ENCODE measurements at regions of chr17 and their contacts with region 1.

Region 1: DNA sequence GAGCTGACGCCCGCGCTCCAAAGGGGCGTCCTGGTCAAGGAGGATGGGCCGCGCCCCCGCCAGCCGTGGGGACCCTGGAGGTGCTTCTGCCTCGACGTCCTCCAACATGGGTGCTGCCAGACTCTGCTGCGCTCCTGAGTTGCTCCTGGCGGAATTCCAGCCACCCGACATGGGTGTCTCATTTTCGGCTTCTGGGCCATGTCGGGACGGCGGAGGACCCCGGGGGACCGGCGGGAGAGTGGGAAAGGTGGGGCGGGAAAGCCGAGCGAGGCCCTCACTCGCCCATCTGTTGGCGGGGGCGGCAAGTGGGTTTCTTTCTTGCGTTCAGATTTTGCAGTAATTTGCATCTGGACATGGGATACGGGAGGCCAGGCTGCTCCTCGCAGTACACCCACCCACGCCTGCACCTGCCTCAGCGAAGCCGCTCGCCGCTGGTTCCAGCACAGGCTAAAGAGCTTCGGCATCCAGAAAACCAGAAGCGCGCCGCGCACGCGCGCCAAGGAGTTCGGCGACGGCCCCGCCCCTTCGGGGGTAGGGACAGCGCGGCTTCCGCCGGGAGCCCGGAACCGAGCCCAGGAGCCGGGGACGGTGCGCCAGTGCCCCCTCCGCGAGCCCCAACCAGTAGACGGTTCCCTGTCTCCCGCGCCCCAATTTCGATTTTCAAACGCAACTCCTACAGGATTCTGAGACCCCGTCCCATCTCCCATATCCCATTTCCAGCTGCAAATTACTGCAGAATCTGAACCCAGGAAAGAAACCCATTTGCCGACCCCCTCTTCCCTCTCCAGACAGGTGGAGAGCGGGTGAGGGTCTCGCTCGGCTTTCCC is at the start of gene ARMC7:
- DNase-seq: peak; percentile 96
- H3K4me3 Mint-ChIP-seq: peak within 1 kb of the TSS; percentile 90
- H3K27ac Mint-ChIP-seq: peak within 1 kb of the TSS; percentile 85
- H3K4me1 Mint-ChIP-seq: peaks cover 29% of the 10 kb centered on the region
- H3K27me3 Mint-ChIP-seq: no peaks in the 10 kb centered on the region
- total RNA-seq, gene ARMC7: 6.5 to 8.2 TPM

Region 2: GRCh38 chr17:75059369-75060345 is 50.0 kb before region 1 on chr17:
- CTCF ChIA-PET with region 1: interaction called, 14 read pairs
- POLR2A ChIA-PET with region 1: no interaction called
- intact Hi-C with region 1: no loop called
- DNase-seq: no peak
- H3K4me3 Mint-ChIP-seq: no peak overlapping the region
- H3K27ac Mint-ChIP-seq: no peak overlapping the region
- H3K4me1 Mint-ChIP-seq: peaks cover 7% of the 10 kb centered on the region
- H3K27me3 Mint-ChIP-seq: no peaks in the 10 kb centered on the region

Region 3: DNA sequence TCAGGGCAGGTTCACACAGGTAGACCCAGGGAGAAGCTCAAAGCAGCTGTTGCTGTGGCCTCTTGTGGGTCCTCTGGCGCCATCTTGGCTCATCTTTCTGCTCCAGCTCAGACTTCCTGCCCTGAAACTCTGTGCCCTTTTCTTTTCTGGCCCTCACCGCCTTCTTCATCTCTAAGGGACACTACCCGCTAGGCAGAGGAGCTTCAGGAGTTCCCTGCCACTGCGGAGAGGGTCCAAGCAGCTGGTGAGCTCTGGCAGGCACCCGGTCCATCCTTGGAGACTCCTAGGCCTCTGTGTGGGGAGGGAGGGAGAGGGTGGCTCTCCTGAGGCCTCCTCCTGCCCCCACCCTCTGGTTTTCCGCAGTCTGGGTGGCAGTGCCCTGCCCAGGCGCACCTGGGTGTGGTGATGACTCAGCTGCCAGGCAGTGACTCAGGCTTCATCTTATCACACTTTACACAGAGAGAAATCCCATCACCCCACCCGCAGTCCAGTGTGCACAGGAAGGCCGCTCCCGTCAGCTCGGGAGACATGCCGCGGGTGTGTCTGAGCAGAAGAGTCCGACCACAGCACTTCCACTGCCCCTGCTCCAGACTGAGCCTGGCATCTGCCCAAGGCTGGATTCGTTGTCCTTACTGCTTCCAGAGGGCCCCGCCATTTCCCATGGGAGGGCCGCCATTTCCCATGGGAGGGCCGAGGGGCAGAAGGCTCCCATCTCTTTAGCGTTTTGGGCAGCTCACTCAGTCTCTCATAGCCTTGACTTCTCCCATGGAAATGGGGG is 14.6 kb after region 1 on chr17:
- CTCF ChIA-PET with region 1: interaction called, 121 read pairs
- POLR2A ChIA-PET with region 1: interaction called, 17 read pairs
- intact Hi-C with region 1: loop called (anchors 1 kb)
- DNase-seq: peak; percentile 86
- H3K4me3 Mint-ChIP-seq: peak overlapping the region; percentile 18
- H3K27ac Mint-ChIP-seq: peak overlapping the region; percentile 77
- H3K4me1 Mint-ChIP-seq: peaks cover 30% of the 10 kb centered on the region
- H3K27me3 Mint-ChIP-seq: no peaks in the 10 kb centered on the region

Region 4: DNA sequence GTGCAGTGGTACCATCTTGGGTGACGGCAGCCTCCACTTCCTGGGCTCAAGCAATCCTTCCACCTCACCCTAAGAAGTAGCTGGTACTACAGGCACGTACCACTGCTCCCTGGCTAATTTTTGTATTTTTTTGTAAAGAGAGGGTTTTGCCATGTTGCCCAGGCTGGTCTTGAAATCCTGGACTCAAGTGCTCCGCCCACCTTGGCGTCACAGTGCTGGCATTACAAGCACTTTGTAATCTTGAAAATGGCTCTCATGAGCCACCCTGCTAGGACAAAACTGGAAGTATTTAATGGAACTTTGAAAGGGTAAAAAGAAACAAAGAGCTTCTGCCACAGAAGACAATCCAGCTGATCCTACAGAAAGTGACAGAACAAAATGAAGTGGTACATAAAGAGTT is 63.9 kb after region 1 on chr17:
- CTCF ChIA-PET with region 1: interaction called, 99 read pairs
- POLR2A ChIA-PET with region 1: interaction called, 4 read pairs
- intact Hi-C with region 1: no loop called
- DNase-seq: no peak
- H3K4me3 Mint-ChIP-seq: no peak overlapping the region
- H3K27ac Mint-ChIP-seq: peak overlapping the region; percentile 39
- H3K4me1 Mint-ChIP-seq: peaks cover 15% of the 10 kb centered on the region
- H3K27me3 Mint-ChIP-seq: no peaks in the 10 kb centered on the region

Region 5: DNA sequence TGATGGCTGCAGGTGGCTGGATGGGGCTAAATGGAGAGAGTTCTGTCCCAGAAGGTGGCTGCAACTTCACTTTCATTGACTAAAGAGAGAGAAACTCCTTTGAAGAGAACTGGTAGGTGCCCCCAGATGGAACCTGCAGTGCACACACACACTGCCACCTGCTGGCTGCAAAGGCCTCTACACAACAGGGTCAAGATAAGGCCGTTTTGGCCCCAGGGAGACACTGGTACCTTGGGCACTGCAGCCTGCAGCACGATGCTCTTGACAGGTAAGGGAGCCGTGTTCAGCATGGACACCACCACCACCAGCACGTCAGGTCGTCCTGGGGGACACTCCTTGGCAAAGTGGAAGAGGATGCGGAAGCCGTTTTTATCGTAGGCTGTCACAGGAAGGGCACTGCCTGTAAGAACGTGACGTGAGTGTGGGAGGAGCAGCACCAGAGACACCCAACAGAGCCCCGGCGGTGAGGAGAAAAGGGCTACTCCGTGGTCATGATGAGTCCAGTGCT is 129.1 kb after region 1 on chr17:
- CTCF ChIA-PET with region 1: interaction called, 24 read pairs
- POLR2A ChIA-PET with region 1: interaction called, 3 read pairs
- intact Hi-C with region 1: no loop called
- DNase-seq: peak; percentile 74
- H3K4me3 Mint-ChIP-seq: no peak overlapping the region
- H3K27ac Mint-ChIP-seq: peak overlapping the region; percentile 85
- H3K4me1 Mint-ChIP-seq: peaks cover 41% of the 10 kb centered on the region
- H3K27me3 Mint-ChIP-seq: no peaks in the 10 kb centered on the region

Region 6: DNA sequence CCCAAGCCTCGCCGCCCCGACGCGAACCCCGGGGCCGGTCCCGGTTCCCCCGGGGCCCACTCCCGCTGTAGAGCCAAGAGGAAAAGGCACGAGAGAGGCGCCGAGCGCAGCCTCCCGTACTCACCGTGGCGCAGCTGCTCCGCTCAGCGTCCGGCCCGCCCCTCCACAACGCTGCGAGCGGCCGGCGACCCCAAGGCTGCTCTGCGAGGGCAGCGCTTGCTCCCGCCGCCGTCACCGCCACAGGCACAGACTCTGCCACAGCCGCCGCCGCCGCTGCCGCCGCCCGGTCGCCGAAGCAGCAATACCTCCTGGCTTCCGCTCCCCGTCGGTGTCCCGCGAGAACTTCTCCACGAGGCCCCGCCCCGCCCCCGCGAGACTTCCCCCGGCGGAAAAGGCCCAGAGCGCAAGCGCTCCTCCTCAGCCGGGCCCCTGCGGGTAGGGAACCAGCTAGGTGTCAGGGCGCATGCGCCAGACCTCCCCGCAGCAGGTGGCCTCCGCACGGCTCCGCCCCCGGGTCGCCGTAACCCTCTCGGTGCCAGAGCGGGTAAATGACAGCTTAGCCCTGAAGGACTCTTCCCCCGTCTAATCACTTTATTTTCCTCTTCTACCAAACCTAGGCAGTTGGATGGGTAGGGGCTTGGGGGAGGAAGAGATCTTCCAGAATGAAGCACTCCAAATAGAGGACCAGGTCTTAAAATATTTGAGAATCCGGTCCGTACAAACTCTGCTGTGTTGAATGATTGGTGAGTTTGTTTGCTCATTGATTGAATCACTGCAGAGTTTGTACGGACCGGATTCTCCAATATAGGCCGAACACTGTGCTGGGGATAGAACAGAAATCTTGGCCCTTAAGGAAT is 296.0 kb after region 1 on chr17 and contains the start of gene GRB2:
- CTCF ChIA-PET with region 1: interaction called, 3 read pairs
- POLR2A ChIA-PET with region 1: no interaction called
- intact Hi-C with region 1: loop called (anchors 2 kb)
- DNase-seq: peak; percentile 100
- H3K4me3 Mint-ChIP-seq: peak within 1 kb of the TSS; percentile 89
- H3K27ac Mint-ChIP-seq: peak within 1 kb of the TSS; percentile 95
- H3K4me1 Mint-ChIP-seq: peaks cover 31% of the 10 kb centered on the region
- H3K27me3 Mint-ChIP-seq: no peaks in the 10 kb centered on the region
- total RNA-seq, gene GRB2: 174 to 182 TPM